T-cell (primary cell): ENCODE measurements at regions of chr2 and their contacts with region 1.

Region 1: GRCh38 chr2:230475143-230475542 is 59.1 kb downstream of the SP100 start:
- DNase-seq: no peak
- ATAC-seq: no peak
- H3K4me3 ChIP-seq: no peak overlapping the region
- H3K4me3 Mint-ChIP-seq: no peak overlapping the region
- H3K27ac ChIP-seq: no peak overlapping the region
- H3K27ac Mint-ChIP-seq: peak overlapping the region; percentile 42 to 74
- H3K4me1 ChIP-seq: peaks cover 6 to 18% of the 10 kb centered on the region in 2 experiments
- H3K4me1 Mint-ChIP-seq: peaks cover 37 to 58% (median 41%) of the 10 kb centered on the region in 3 donors
- H3K27me3 ChIP-seq: no peaks in the 10 kb centered on the region
- H3K27me3 Mint-ChIP-seq: no peaks in the 10 kb centered on the region

Region 2: GRCh38 chr2:230569298-230569697 is 94.2 kb after region 1 on chr2:
- CTCF ChIA-PET with region 1: no interaction called
- POLR2A ChIA-PET with region 1: interaction called in 1 of 2 experiments, 10 read pairs
- DNase-seq: no peak
- ATAC-seq: no peak
- H3K4me3 ChIP-seq: no peak overlapping the region
- H3K4me3 Mint-ChIP-seq: no peak overlapping the region
- H3K27ac ChIP-seq: no peak overlapping the region
- H3K27ac Mint-ChIP-seq: no peak overlapping the region
- H3K4me1 ChIP-seq: no peaks in the 10 kb centered on the region
- H3K4me1 Mint-ChIP-seq: peaks cover 0 to 16% (median 13%) of the 10 kb centered on the region in 3 donors
- H3K27me3 ChIP-seq: no peaks in the 10 kb centered on the region
- H3K27me3 Mint-ChIP-seq: no peaks in the 10 kb centered on the region